WTC11 (cell line): ENCODE measurements at regions of chr16 and their contacts with region 1.

Region 1: GRCh38 chr16:58299757-58300349 is 5.0 kb upstream of the PRSS54 start:
- DNase-seq: peak; percentile 65
- ATAC-seq: peak; percentile 96
- H3K4me3 Mint-ChIP-seq: no peak overlapping the region
- H3K27ac Mint-ChIP-seq: no peak overlapping the region
- H3K4me1 Mint-ChIP-seq: 0 out of 2 replicates have a peak, but pooled peaks cover 3% of the 10 kb centered on the region
- H3K27me3 Mint-ChIP-seq: peaks cover 14% of the 10 kb centered on the region
- CTCF ChIP-seq: peak; percentile 76

Region 2: GRCh38 chr16:58116046-58116445 is 183.8 kb before region 1 on chr16:
- CTCF ChIA-PET with region 1: no interaction called
- POLR2A ChIA-PET with region 1: no interaction called
- DNase-seq: no peak
- ATAC-seq: no peak
- H3K4me3 Mint-ChIP-seq: no peak overlapping the region
- H3K27ac Mint-ChIP-seq: no peak overlapping the region
- H3K4me1 Mint-ChIP-seq: peaks cover 9% of the 10 kb centered on the region
- H3K27me3 Mint-ChIP-seq: no peaks in the 10 kb centered on the region
- CTCF ChIP-seq: no peak

Region 3: GRCh38 chr16:58329147-58329546 is 29.3 kb after region 1 on chr16:
- CTCF ChIA-PET with region 1: interaction called, 12 read pairs
- POLR2A ChIA-PET with region 1: no interaction called
- DNase-seq: no peak
- ATAC-seq: no peak
- H3K4me3 Mint-ChIP-seq: no peak overlapping the region
- H3K27ac Mint-ChIP-seq: no peak overlapping the region
- H3K4me1 Mint-ChIP-seq: peaks cover 23% of the 10 kb centered on the region
- H3K27me3 Mint-ChIP-seq: no peaks in the 10 kb centered on the region
- CTCF ChIP-seq: no peak

Region 4: DNA sequence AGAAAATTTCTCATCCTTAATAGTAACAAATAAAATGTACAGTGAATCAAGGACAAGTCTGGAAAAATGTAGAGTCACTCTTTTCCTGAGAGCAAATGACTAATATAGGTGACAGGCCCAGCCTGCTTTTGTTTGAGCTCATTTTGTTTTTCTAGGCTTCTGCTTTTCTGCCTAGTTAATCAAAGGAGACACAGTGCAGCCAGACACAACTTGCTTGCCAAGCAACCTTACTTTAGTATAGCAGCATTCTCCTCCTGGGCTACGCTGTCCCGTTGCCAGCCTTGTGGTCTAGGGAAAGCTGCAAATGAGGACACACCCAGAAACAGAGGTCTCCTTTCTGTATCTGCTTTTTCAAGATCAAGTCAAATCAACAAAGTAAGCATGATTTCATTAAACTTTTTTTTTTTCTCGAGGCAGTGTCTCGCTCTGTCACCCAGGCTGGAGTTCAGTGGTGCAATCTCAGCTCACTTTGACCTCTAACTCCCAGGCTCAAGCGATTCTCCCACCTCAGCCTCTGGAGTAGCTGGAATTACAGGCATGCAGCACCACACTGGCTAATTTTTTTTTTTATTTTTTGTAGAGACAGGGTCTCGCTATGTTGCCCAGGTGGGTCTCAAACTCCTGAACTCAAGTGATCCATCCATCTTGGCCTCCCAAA is 109.6 kb after region 1 on chr16:
- CTCF ChIA-PET with region 1: interaction called, 12 read pairs
- POLR2A ChIA-PET with region 1: no interaction called
- DNase-seq: no peak
- ATAC-seq: no peak
- H3K4me3 Mint-ChIP-seq: no peak overlapping the region
- H3K27ac Mint-ChIP-seq: no peak overlapping the region
- H3K4me1 Mint-ChIP-seq: no peaks in the 10 kb centered on the region
- H3K27me3 Mint-ChIP-seq: no peaks in the 10 kb centered on the region; the same call in 1 of the 2 replicates
- CTCF ChIP-seq: no peak

Region 5: DNA sequence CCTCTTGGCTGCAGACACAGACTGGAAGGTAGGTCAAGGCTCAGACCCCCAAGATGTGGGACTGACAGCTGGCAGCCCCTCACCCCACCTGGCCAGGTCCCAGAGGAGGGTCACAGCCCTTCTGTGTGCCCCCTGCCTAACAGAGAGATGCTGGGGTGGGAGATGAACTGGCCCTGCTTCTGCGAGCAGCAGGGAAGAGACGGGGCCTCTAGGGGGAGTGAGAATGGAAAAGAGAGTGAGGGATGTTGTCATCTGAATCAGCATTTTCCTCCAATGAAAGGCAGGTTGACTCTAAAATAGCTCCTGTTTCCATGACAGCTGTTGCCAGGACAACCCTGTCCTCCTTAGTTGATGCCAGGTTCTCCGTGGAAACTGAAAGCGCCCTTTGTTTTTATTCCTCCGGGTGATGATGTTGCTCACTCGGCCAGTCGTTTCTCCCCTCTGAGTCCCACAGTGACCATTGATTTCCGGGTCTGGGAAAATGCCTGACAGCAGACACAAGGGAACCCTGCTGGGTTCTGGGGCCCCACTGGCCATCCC is 195.2 kb after region 1 on chr16:
- CTCF ChIA-PET with region 1: interaction called, 29 read pairs
- POLR2A ChIA-PET with region 1: no interaction called
- DNase-seq: peak; percentile 83
- ATAC-seq: peak; percentile 60
- H3K4me3 Mint-ChIP-seq: 0 out of 2 replicates have a peak overlapping the region, but pooled peaks have one; percentile 22
- H3K27ac Mint-ChIP-seq: 0 out of 2 replicates have a peak overlapping the region, but pooled peaks have one; percentile 72
- H3K4me1 Mint-ChIP-seq: peaks cover 16% of the 10 kb centered on the region
- H3K27me3 Mint-ChIP-seq: peaks cover 37% of the 10 kb centered on the region
- CTCF ChIP-seq: no peak; the same call in 1 of the 2 replicates